Heart right ventricle (tissue), 16 donors: ENCODE measurements at regions of chr3 and their contacts with region 1.

Region 1: DNA sequence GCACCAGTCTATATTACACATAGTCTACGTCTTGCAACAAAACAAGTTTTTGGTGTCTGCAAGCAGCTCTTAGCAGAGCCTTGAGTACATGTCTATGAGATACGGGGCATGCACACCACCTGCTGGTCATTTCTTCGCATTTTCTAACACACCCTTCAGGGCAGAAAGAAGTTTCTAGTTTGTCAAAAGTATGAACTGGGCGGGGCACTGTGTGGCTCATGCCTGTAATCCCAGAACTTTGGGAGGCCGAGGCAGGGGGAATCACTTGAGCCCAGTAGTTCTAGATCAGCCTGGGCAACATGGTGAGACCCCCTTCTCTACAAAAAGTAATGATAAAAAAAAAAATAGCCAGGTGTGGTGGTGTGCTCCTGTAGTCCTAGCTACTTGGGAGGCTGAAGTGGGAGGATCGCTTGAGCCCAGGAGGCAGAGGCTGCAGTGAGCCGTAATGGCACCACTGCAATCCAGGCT is 64.2 kb upstream of the ARL8B start:
- DNase-seq: peak; percentile 46 to 83
- ATAC-seq: peak; percentile 87 to 90 (median 88)
- H3K4me3 ChIP-seq: no peak overlapping the region
- H3K27ac ChIP-seq: peak overlapping the region in 2 of 10 donors; percentile 4 to 63
- H3K4me1 ChIP-seq: peaks cover 0 to 62% (median 12%) of the 10 kb centered on the region in 9 donors
- H3K27me3 ChIP-seq: peaks cover 0 to 6% (median 0%) of the 10 kb centered on the region in 7 donors
- CTCF ChIP-seq: peak; percentile 57 to 90 (median 75)

Region 2: DNA sequence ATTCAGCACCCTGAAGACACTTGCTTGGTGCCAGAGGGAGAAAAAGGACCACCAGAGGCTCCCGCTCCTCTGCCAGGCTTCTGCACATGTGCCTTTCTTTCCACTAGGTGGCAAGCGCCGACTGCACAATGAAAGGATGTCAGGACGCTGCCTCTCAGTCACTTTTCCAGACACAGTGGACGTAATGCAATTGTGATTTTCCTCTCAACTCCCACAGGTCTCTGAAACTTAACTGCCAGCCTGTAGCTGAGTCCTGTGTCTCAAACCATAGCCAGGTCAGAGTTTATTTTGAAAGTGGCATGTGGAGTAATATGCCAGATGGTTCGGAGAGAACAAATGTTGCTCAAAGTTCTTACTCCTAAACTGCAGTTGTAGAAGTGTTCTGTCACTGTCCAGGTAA is 401.8 kb before region 1 on chr3:
- intact Hi-C with region 1: loop called in 8 of 10 experiments (anchors 1 to 10 kb)
- DNase-seq: peak; percentile 52 to 67
- ATAC-seq: peak; percentile 83 to 92 (median 88)
- H3K4me3 ChIP-seq: no peak overlapping the region
- H3K27ac ChIP-seq: peak overlapping the region in 4 of 10 donors; percentile 32 to 64 (median 40)
- H3K4me1 ChIP-seq: peaks cover 0 to 18% (median 11%) of the 10 kb centered on the region in 9 donors
- H3K27me3 ChIP-seq: no peaks in the 10 kb centered on the region
- CTCF ChIP-seq: peak; percentile 60 to 91 (median 81)

Region 3: DNA sequence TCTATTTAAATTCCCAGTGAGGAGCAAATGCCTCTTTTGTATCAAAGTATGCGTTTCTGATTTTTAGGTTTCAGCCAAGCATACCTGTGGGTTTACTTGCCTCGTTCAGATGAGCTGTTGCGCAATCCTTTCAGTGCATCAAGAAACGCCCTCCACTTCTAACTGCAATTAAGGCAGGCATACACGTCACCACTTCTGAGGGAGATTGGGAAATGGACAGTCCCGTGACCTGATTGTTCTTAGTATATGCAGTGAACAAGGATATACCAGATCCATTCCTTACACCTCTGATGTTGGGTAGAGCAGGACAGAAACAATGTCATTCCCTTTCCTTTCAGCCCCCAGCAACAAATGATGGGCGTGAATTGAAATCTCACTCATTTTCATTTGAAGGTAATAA is 345.7 kb before region 1 on chr3:
- intact Hi-C with region 1: loop called (anchors 1 to 5 kb)
- DNase-seq: no peak
- ATAC-seq: peak in 2 of 8 donors; percentile 36 to 39
- H3K4me3 ChIP-seq: no peak overlapping the region
- H3K27ac ChIP-seq: peak overlapping the region in 1 of 10 donors; percentile 68
- H3K4me1 ChIP-seq: peaks cover 0 to 28% (median 5%) of the 10 kb centered on the region in 9 donors
- H3K27me3 ChIP-seq: no peaks in the 10 kb centered on the region
- CTCF ChIP-seq: no peak

Region 4: DNA sequence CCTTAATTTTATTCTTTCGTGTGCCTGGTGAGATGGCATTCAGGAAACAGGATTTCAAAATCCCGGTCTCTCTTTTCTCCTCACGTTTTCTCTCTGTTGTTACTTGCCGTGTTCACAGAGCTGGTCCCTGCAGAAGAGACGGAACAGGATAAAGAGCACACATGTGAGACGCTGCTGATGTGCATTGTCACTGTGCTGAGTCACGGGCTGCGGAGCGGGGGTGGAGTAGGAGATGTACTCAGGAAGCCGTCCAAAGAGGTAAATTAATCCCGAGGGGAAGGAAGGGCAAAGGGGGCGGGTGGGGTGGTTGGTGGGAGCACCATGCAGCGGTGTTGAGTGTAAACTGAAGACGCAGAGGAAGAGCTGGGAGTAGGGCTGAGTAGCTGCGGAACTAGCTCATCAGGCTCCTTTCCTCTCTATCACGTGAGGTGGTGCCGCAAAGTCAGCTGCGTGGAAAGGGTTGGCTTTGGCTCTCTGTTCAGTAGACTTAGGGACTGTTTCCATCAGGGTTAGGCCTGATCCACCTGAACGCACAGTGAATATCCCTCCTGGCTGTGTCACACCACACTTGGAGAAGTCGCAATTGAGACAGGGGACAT is 243.5 kb before region 1 on chr3:
- intact Hi-C with region 1: loop called in 1 of 10 experiments (anchors 10 kb)
- DNase-seq: peak in 1 of 2 donors; percentile 31
- ATAC-seq: peak; percentile 69 to 89 (median 84)
- H3K4me3 ChIP-seq: peak overlapping the region in 1 of 10 donors; percentile 10
- H3K27ac ChIP-seq: peak overlapping the region in 7 of 10 donors; percentile 6 to 79 (median 40)
- H3K4me1 ChIP-seq: peaks cover 0 to 17% (median 0%) of the 10 kb centered on the region in 9 donors
- H3K27me3 ChIP-seq: no peaks in the 10 kb centered on the region
- CTCF ChIP-seq: no peak

Region 5: GRCh38 chr3:4877173-4877787 is 180.6 kb before region 1 on chr3:
- intact Hi-C with region 1: loop called in 1 of 10 experiments (anchors 10 kb)
- DNase-seq: no peak
- ATAC-seq: no peak
- H3K4me3 ChIP-seq: no peak overlapping the region
- H3K27ac ChIP-seq: no peak overlapping the region
- H3K4me1 ChIP-seq: no peaks in the 10 kb centered on the region
- H3K27me3 ChIP-seq: no peaks in the 10 kb centered on the region
- CTCF ChIP-seq: no peak